ENCODE measurements at regions of chr10 and their contacts with region 1.

Region 1: GRCh38 chr10:98170249-98171117 is 36.0 kb downstream of the R3HCC1L start:
- DNase-seq: peak; percentile 74
- H3K4me3 ChIP-seq: peak overlapping the region; percentile 58
- H3K27ac ChIP-seq: peak overlapping the region; percentile 100
- H3K4me1 ChIP-seq: peaks cover 60% of the 10 kb centered on the region
- CTCF ChIP-seq: peak; percentile 90

Region 2: DNA sequence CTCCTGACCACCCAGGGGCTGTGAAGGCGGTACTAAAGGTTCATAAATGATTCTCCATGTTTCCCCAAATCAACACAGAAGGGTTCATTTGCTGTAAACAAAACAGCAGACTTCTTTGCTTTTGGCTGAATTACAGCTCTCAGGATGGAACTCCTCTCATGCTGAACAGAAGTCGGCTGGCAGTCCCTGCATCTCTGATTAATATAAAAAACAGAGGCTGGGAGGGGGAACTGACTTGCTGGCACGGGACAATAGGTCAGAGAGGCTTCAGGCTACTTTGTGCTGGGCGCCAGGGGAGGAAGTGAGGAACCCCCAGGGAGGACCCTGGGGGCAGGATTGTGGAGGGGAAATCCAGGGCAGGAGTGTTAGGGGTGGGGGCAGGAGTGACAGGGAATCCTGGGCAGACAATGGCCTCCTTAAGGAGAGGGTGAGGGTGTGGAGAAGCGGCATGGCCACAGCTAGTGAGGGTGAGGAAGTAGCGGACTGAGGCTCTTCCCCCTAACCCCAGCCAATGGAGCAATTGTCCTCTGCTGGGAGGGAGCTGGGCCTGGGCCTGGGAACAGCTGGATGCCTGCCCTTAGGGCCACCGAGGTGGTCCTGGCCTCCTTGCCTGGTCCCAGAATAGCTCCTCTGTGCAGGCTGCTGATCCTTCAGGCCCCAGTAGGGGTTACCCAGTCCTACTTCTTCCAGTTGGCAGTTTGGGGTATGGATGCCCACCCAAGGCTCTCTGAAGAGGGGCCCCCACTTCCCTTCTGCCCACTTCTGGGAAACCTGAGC is 389.5 kb before region 1 on chr10:
- CTCF ChIA-PET with region 1: no interaction called
- POLR2A ChIA-PET with region 1: no interaction called
- intact Hi-C with region 1: no loop called
- DNase-seq: no peak
- H3K4me3 ChIP-seq: no peak overlapping the region
- H3K27ac ChIP-seq: no peak overlapping the region
- H3K4me1 ChIP-seq: no peaks in the 10 kb centered on the region
- CTCF ChIP-seq: no peak

Region 3: DNA sequence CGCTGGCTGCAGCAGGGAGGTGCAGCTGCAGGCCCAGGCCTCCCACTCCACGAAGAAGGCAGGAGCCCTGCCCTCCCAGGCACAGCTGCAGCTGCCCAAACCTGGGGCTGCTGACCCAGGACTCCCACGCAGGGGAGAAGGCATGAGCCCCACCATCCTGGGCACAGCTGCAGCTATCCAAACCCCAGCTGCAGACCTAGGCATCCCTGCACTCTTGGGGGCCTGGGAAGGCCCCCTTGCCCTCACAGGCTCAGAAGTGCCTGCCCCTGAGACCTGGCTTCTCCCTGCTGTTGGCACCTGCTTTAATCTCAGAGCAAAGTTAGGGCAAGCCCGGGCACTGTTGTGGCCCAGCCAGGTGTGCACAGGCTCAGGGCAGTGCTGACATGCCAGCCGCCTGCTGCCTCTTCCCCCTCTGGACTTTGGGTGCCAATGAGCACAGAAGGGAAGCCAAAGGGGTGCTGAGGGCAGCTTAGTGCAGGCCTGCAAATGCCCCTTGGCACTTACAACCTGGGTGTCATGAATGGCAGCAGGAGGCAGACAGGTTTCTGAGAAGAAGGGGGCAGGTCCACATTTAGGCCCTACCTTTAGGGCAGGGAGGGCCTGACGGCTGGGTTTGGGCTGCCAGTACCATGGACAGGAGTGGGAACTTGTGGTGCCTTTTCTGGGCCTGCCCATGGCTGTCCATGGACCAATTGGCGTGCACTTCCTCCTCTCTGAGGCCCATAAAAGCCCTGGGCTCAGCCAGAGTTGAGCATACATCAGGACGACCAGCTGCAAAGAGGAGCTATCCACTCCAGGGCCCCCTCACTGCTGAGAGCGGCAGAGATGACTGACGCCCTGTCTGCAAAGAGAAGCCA is 171.2 kb before region 1 on chr10:
- CTCF ChIA-PET with region 1: no interaction called
- POLR2A ChIA-PET with region 1: no interaction called
- intact Hi-C with region 1: no loop called
- DNase-seq: no peak
- H3K4me3 ChIP-seq: no peak overlapping the region
- H3K27ac ChIP-seq: no peak overlapping the region
- H3K4me1 ChIP-seq: no peaks in the 10 kb centered on the region
- CTCF ChIP-seq: no peak

Region 4: GRCh38 chr10:98134431-98135221 is 35.9 kb before region 1 on chr10 and contains the start of gene R3HCC1L:
- CTCF ChIA-PET with region 1: interaction called, 17 read pairs
- POLR2A ChIA-PET with region 1: interaction called, 171 read pairs
- intact Hi-C with region 1: loop called (anchors 1 kb)
- DNase-seq: peak; percentile 97
- H3K4me3 ChIP-seq: peak within 1 kb of the TSS; percentile 90
- H3K27ac ChIP-seq: peak within 1 kb of the TSS; percentile 92
- H3K4me1 ChIP-seq: peaks cover 59% of the 10 kb centered on the region
- CTCF ChIP-seq: no peak
- total RNA-seq, gene R3HCC1L: 42.0 and 48.5 TPM in 2 replicates

Region 5: GRCh38 chr10:98141484-98142073 is 28.9 kb before region 1 on chr10:
- CTCF ChIA-PET with region 1: interaction called, 3 read pairs
- POLR2A ChIA-PET with region 1: interaction called, 171 read pairs
- intact Hi-C with region 1: loop called (anchors 1 kb)
- DNase-seq: peak; percentile 50
- H3K4me3 ChIP-seq: peak overlapping the region; percentile 21
- H3K27ac ChIP-seq: peak overlapping the region; percentile 57
- H3K4me1 ChIP-seq: peaks cover 76% of the 10 kb centered on the region
- CTCF ChIP-seq: no peak

Region 6: DNA sequence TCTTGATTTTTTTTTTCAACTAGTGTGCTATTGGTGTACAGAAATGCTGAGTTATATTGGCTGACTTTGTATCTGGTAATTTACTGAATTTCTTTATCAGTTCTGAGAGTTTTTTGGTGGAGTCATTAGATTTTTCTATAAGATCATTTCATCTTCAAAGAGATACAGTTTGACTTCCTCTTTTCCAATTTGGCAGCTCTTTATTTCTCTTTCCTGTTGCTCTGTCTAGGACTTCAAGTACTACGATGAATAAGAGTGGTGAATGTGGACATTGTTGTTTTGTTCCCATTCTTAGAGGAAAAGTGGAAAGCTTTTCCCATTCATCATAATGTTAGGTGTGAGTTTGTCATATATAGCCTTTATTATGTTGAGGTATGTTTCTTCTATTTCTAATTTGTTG is 47.3 kb after region 1 on chr10:
- CTCF ChIA-PET with region 1: no interaction called
- POLR2A ChIA-PET with region 1: no interaction called
- intact Hi-C with region 1: no loop called
- DNase-seq: peak; percentile 11
- H3K4me3 ChIP-seq: no peak overlapping the region
- H3K27ac ChIP-seq: no peak overlapping the region
- H3K4me1 ChIP-seq: peaks cover 6% of the 10 kb centered on the region
- CTCF ChIP-seq: no peak

Region 7: DNA sequence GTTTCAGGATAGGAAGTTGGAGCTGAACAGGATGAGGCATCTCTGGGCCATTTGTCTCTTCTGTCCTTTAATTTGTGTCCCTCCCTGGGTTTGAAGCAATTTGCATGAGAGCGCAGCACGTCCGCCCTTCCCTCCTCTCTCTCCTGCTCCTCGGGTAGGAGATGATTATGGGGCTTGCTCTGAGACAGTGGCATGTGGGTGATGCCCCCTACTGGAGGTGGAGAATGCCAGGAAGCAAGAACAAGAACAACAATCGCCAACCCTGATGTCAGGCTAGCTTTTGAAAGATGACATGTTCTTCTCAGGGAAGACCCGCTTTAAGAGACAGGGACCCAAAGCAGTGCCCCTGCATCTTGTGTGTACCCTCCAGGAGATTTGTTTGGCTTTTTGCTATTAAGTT is 161.4 kb after region 1 on chr10:
- CTCF ChIA-PET with region 1: no interaction called
- POLR2A ChIA-PET with region 1: no interaction called
- intact Hi-C with region 1: loop called (anchors 2 kb)
- DNase-seq: peak; percentile 65
- H3K4me3 ChIP-seq: no peak overlapping the region
- H3K27ac ChIP-seq: no peak overlapping the region
- H3K4me1 ChIP-seq: peaks cover 4% of the 10 kb centered on the region
- CTCF ChIP-seq: peak; percentile 83

Region 8: GRCh38 chr10:98391578-98391991 is 221.1 kb after region 1 on chr10:
- CTCF ChIA-PET with region 1: interaction called, 7 read pairs
- POLR2A ChIA-PET with region 1: no interaction called
- intact Hi-C with region 1: loop called (anchors 1 kb)
- DNase-seq: peak; percentile 25
- H3K4me3 ChIP-seq: no peak overlapping the region
- H3K27ac ChIP-seq: no peak overlapping the region
- H3K4me1 ChIP-seq: peaks cover 9% of the 10 kb centered on the region
- CTCF ChIP-seq: no peak

Region 9: GRCh38 chr10:98404571-98405359 is 234.3 kb after region 1 on chr10:
- CTCF ChIA-PET with region 1: no interaction called
- POLR2A ChIA-PET with region 1: no interaction called
- intact Hi-C with region 1: no loop called
- DNase-seq: no peak
- H3K4me3 ChIP-seq: no peak overlapping the region
- H3K27ac ChIP-seq: no peak overlapping the region
- H3K4me1 ChIP-seq: no peaks in the 10 kb centered on the region
- CTCF ChIP-seq: no peak